H1 (cell line): ENCODE measurements at regions of chr11 and their contacts with region 1.

Region 1: DNA sequence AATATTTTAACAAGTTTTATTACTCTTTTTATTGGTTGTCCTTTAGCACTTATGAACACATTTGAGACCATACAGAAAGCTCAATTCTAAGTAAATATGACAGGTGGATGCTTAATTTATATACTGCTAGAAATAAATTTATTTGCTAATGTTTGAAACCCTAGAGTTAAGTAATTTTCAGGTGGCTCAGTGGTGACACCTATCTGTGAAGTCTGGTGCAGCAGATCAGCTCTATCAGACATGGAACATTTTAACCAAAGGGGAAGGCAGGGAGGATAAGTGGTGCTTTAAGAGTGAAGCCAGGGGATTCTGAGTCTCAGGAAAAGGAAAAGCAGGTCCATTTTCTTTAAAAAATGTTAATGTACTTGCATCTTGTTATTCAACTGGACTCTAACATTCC is 175.8 kb downstream of the DSCAML1 start:
- DNase-seq: no peak
- H3K4me3 ChIP-seq: no peak overlapping the region
- H3K27ac ChIP-seq: no peak overlapping the region
- H3K4me1 ChIP-seq: peaks cover 0 to 4% (median 2%) of the 10 kb centered on the region in 4 experiments; a peak in 4 of 7 replicates
- H3K27me3 ChIP-seq: no peaks in the 10 kb centered on the region
- CTCF ChIP-seq: peak; percentile 3 to 59 (median 41)
- EP300 ChIP-seq: no peak
- POLR2A ChIP-seq: no peak
- RAD21 ChIP-seq: peak; percentile 31 to 52; a peak in 3 of 4 replicates

Region 2: DNA sequence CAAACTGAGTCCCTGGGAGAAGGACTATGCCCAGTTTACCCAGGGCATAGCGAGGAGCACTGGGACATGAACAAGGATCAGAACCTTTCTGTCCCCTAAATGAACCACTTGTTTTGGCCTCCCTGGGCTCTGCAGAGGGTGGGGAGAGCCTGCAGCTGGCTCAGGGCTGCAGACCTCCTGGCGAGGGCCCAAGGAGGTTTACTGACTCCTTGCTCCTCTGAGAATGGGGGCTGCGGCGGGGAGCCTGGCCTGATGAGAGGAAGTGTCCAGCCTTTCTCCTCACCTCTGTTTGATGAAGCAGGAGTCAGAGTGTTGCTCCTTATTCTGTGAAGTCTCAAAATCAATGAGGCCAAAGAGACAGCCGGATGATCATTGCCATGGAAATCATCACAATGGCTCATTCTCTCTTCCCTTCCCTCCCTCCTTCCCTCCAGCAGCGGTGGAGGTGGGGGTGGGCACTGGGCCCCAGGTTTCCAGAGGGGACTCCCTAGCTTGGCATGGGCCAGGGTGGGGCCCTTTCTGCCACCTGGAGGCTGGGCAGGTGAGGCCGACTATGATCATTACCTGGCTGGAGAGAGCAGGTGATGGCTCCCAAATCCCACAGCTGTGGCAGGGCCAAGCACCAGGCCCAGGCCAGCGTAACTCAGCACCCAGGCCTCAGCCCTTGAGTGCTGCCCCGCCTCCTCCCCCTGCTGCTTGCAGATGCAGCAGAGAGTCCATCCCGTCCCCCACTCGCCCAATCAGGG is 123.8 kb before region 1 on chr11:
- CTCF ChIA-PET with region 1: interaction called, 10 read pairs
- POLR2A ChIA-PET with region 1: interaction called, 3 read pairs
- DNase-seq: no peak
- H3K4me3 ChIP-seq: no peak overlapping the region
- H3K27ac ChIP-seq: no peak overlapping the region
- H3K4me1 ChIP-seq: peaks cover 2 to 17% (median 11%) of the 10 kb centered on the region in 4 experiments
- H3K27me3 ChIP-seq: peaks cover 0 to 5% (median 1%) of the 10 kb centered on the region in 4 experiments; a peak in 3 of 7 replicates
- CTCF ChIP-seq: no peak
- EP300 ChIP-seq: no peak
- POLR2A ChIP-seq: no peak
- RAD21 ChIP-seq: no peak

Region 3: DNA sequence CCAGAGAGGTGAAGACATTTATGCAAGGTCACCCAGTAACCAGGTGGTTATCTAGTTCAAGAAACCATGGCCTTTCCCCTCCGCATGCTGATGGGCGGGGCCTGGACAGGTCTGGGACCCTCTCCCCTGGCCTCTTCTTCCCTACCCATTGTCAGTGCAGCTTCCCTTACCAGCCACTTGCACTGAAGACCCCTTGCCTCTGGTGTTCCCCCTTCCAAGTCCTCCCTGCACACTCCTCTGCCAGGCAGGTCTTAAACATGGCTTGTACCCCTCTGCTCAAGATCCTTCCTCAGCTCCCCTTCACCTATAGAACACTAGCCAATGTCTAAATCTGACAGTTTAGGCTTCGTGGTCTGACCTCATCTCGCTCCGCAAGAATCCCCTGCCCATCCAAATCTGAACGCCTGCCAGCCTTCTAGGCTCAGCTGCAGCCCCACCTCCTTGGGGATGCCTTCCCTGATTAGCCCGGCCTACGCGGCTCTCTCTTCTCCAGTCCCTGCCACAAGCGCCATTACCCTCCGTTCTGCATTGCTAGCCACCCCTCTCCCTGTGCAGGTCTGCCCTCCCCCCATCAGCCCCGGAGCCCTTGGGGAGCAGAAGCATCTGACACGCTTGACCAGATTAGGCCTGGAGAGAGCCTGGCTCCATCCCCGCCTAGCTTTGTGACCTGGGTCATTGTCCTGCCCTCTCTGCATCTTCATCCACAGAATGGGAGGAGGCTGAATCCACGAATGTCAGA is 38.0 kb before region 1 on chr11:
- CTCF ChIA-PET with region 1: interaction called, 11 read pairs
- POLR2A ChIA-PET with region 1: no interaction called
- DNase-seq: no peak
- H3K4me3 ChIP-seq: peak overlapping the region in 2 of 4 experiments; percentile 0 to 29; a peak in 1 of 8 replicates
- H3K27ac ChIP-seq: no peak overlapping the region
- H3K4me1 ChIP-seq: peaks cover 11 to 25% (median 13%) of the 10 kb centered on the region in 4 experiments
- H3K27me3 ChIP-seq: peaks cover 0 to 3% (median 3%) of the 10 kb centered on the region in 4 experiments; a peak in 1 of 7 replicates
- CTCF ChIP-seq: no peak
- EP300 ChIP-seq: no peak
- POLR2A ChIP-seq: no peak
- RAD21 ChIP-seq: no peak

Region 4: DNA sequence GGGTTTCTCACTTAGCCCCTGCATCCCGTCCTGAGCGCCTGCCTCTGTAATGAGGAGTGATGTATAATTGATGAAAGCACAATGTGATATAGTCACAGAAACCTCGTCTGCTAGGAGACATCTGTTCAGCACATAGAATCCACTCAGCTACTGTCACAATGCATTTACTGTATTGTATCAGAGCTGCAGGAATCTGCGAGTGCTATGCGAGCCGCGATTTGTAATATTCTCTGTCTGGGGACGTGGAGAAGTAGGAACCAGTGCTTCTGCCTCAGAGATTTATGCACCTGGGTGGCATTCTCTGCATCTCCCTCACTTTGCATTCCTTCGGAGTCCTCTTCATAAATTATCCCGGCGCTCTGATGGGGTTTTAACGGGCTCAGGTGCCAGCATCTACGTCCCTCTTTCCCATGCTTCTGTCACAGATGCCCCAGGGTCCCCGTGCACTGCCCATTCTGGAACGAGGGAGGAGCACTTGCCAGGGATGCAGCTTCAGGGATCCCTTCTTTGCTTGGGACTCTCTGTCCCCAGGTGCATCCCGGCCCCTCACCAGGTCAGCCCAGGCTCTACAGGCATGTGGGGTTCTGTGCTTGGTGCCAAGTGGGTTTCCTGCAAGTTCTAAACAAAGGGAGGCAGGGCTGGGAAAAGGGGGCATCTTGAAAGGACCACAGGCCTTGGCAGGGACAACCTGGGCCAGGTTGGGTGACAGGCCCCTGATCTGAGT is 29.7 kb before region 1 on chr11:
- CTCF ChIA-PET with region 1: interaction called, 11 read pairs
- POLR2A ChIA-PET with region 1: no interaction called
- DNase-seq: no peak
- H3K4me3 ChIP-seq: no peak overlapping the region
- H3K27ac ChIP-seq: no peak overlapping the region
- H3K4me1 ChIP-seq: no peaks in the 10 kb centered on the region; a peak in 1 of 7 replicates
- H3K27me3 ChIP-seq: peaks cover 0 to under 1% (median under 1%) of the 10 kb centered on the region in 4 experiments; a peak in 1 of 7 replicates
- CTCF ChIP-seq: no peak
- EP300 ChIP-seq: no peak
- POLR2A ChIP-seq: no peak
- RAD21 ChIP-seq: no peak

Region 5: GRCh38 chr11:117597071-117597470 is 24.2 kb before region 1 on chr11:
- CTCF ChIA-PET with region 1: interaction called, 12 read pairs
- POLR2A ChIA-PET with region 1: no interaction called
- DNase-seq: peak in 1 of 2 experiments; percentile 85
- H3K4me3 ChIP-seq: no peak overlapping the region
- H3K27ac ChIP-seq: no peak overlapping the region
- H3K4me1 ChIP-seq: peaks cover 3 to 14% (median 9%) of the 10 kb centered on the region in 4 experiments
- H3K27me3 ChIP-seq: no peaks in the 10 kb centered on the region; a peak in 1 of 7 replicates
- CTCF ChIP-seq: no peak
- EP300 ChIP-seq: no peak
- POLR2A ChIP-seq: no peak
- RAD21 ChIP-seq: peak in 1 of 2 experiments; percentile 16; a peak in 1 of 4 replicates

Region 6: DNA sequence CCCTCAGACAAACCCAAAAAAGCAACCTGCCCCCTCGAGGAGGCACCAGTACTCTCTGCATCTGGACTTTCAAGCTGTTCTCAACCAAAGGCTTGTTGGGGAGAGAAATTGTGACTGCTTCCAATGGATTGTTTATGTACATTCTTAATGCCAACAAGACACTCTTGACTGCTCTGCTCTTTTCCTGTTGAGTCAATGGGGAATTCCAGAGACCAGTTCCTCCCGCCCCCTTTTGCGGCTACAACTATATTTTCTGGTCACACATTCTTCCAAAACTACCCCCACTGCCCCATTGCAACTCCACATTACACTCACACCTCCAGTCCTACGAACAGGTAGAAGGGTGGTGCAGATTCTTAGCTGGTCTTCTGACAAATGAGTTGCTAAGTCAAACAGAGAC is 11.2 kb before region 1 on chr11:
- CTCF ChIA-PET with region 1: interaction called, 44 read pairs
- POLR2A ChIA-PET with region 1: interaction called, 4 read pairs
- DNase-seq: no peak
- H3K4me3 ChIP-seq: no peak overlapping the region
- H3K27ac ChIP-seq: no peak overlapping the region
- H3K4me1 ChIP-seq: peaks cover 0 to 34% (median 19%) of the 10 kb centered on the region in 4 experiments; a peak in 5 of 7 replicates
- H3K27me3 ChIP-seq: peaks cover 0 to 4% (median 1%) of the 10 kb centered on the region in 4 experiments; a peak in 3 of 7 replicates
- CTCF ChIP-seq: no peak
- EP300 ChIP-seq: no peak
- POLR2A ChIP-seq: no peak
- RAD21 ChIP-seq: no peak

Region 7: DNA sequence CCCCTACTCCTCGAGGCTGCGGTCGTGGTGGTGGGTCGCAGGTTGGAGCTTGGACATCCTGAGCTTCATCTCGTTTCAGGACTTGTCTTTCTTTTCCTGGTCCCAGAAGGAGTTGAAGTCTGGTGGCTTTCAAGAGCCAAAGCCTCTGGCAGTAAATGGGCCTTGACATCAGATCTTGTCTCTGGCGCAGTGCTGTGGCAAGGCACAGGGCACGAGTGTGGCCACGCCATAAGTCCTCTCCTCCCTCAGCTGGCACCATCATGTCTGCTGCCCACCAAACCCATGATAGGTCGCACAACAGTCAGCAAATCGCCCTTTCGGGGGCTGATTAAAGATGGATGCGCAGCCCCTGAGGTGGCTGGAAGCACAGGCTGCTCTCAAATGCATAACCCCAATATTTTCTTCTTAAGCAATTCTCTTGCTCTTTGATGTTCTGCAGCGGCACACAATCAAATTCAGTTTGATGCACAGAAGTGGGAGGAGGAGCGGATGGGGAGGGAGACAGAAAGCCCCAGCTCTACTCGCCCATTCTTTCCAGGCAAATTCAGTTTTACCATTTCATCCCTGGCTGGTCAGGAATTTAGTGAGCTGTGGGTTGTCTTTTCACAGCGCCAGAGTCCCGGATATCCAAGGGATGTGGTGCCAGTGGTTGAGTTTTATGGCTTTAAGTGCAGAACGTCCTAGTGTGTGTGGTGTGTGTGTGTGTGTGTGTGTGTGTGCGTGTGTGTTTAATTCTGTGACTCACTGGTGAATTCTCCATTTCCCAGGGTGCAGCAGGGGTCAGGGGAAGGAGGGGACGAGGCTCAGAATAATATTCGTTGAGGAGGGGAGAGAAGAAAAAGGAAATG is 13.8 kb after region 1 on chr11:
- CTCF ChIA-PET with region 1: interaction called, 30 read pairs
- POLR2A ChIA-PET with region 1: no interaction called
- DNase-seq: no peak
- H3K4me3 ChIP-seq: no peak overlapping the region
- H3K27ac ChIP-seq: no peak overlapping the region
- H3K4me1 ChIP-seq: peaks cover 0 to 3% (median 2%) of the 10 kb centered on the region in 4 experiments; a peak in 4 of 7 replicates
- H3K27me3 ChIP-seq: no peaks in the 10 kb centered on the region; a peak in 1 of 7 replicates
- CTCF ChIP-seq: no peak
- EP300 ChIP-seq: no peak
- POLR2A ChIP-seq: no peak
- RAD21 ChIP-seq: no peak

Region 8: GRCh38 chr11:117743123-117743815 is 122.0 kb after region 1 on chr11:
- CTCF ChIA-PET with region 1: no interaction called
- POLR2A ChIA-PET with region 1: no interaction called
- DNase-seq: no peak
- H3K4me3 ChIP-seq: no peak overlapping the region
- H3K27ac ChIP-seq: no peak overlapping the region
- H3K4me1 ChIP-seq: peaks cover 0 to 4% (median 1%) of the 10 kb centered on the region in 4 experiments; a peak in 5 of 7 replicates
- H3K27me3 ChIP-seq: no peaks in the 10 kb centered on the region
- CTCF ChIP-seq: no peak
- EP300 ChIP-seq: no peak
- POLR2A ChIP-seq: no peak
- RAD21 ChIP-seq: no peak